ENCODE measurements at regions of chr11 and their contacts with region 1.

Region 1: DNA sequence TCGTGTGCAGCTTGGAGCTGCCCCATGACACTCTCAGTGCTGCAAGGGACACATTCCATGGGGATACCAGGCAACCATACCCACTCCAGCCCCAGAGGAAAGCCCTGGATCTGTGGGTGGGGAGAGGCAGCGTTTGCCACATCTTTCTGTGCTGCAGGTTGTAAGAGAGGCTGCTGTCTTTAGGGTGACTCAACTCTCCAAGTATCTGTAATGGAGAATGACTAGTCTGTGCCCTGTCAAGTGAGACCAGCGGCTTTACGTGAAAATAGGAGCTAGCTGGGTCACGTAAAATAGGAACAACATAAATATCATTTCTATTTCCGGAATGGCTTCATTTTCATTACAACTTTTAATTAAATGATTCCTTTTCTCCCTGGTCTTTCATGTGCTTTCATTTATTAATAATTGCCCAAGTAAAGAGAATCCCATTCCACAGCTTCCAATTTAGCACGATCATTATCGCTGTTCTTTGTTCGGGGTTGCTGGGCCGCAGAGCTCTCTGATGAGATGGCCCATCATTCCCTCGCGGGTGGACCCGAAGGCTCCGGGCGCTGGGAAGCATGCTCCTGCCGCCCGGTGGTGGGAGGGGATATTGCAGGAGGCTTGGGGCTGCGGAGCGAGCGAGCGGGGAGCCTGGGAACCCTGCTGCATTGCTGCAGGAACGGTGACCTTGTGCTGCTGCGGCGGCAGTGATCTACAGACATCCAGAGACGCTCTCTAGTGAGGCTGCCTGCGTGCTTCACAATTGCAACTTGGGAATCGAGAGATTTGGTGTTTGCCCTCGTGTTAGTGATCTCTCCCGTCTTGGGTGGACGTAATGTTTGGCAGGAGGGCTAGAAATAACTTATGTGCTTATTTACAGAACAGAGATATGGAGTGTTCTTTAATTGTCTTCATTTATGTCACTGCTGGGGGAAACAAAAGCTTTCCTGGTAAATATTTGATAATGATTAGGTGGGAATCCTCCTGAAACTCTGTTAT is 10.6 kb downstream of the SLC6A5 start:
- DNase-seq: peak; percentile 89
- H3K4me3 Mint-ChIP-seq: peak overlapping the region; percentile 48
- H3K27ac Mint-ChIP-seq: no peak overlapping the region
- H3K4me1 Mint-ChIP-seq: peaks cover 10% of the 10 kb centered on the region
- H3K27me3 Mint-ChIP-seq: peaks cover 97% of the 10 kb centered on the region
- CTCF ChIP-seq: peak; percentile 93

Region 2: GRCh38 chr11:20397281-20397680 is 212.7 kb before region 1 on chr11:
- CTCF ChIA-PET with region 1: interaction called, 11 read pairs
- intact Hi-C with region 1: loop called (anchors 1 kb)
- DNase-seq: peak; percentile 11
- H3K4me3 Mint-ChIP-seq: no peak overlapping the region
- H3K27ac Mint-ChIP-seq: no peak overlapping the region
- H3K4me1 Mint-ChIP-seq: no peaks in the 10 kb centered on the region
- H3K27me3 Mint-ChIP-seq: no peaks in the 10 kb centered on the region
- CTCF ChIP-seq: no peak

Region 3: GRCh38 chr11:20451568-20451967 is 158.4 kb before region 1 on chr11:
- CTCF ChIA-PET with region 1: no interaction called
- intact Hi-C with region 1: no loop called
- DNase-seq: no peak
- H3K4me3 Mint-ChIP-seq: no peak overlapping the region
- H3K27ac Mint-ChIP-seq: no peak overlapping the region
- H3K4me1 Mint-ChIP-seq: no peaks in the 10 kb centered on the region
- H3K27me3 Mint-ChIP-seq: no peaks in the 10 kb centered on the region
- CTCF ChIP-seq: no peak

Region 4: GRCh38 chr11:20559523-20560300 is 50.3 kb before region 1 on chr11:
- CTCF ChIA-PET with region 1: no interaction called
- intact Hi-C with region 1: no loop called
- DNase-seq: no peak
- H3K4me3 Mint-ChIP-seq: no peak overlapping the region
- H3K27ac Mint-ChIP-seq: no peak overlapping the region
- H3K4me1 Mint-ChIP-seq: no peaks in the 10 kb centered on the region
- H3K27me3 Mint-ChIP-seq: peaks cover 21% of the 10 kb centered on the region
- CTCF ChIP-seq: no peak

Region 5: DNA sequence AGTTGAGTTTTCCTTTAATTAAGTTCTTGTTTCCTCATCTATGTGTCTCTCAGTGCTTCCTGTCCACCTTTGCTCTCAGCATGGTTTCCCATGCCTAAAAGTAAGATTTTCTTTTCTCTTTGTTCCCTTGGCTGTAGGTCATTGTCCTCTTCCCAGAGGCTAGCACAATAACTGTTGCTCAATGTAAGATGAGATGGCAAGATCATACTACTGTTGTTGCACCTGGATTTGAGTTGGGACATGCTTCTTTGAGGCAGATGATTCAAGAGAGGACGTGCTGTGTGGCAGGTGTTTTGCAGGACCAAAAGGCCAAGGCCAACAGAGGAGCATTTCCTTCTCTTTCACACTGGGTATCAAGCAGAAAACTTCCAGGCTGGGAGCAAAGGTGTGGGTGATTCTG is 48.1 kb after region 1 on chr11:
- CTCF ChIA-PET with region 1: no interaction called
- intact Hi-C with region 1: no loop called
- DNase-seq: no peak
- H3K4me3 Mint-ChIP-seq: no peak overlapping the region
- H3K27ac Mint-ChIP-seq: no peak overlapping the region
- H3K4me1 Mint-ChIP-seq: no peaks in the 10 kb centered on the region
- H3K27me3 Mint-ChIP-seq: peaks cover 36% of the 10 kb centered on the region
- CTCF ChIP-seq: no peak

Measured in Calu3 (cell line).